ENCODE measurements at regions of chr22 and their contacts with region 1.

Region 1: DNA sequence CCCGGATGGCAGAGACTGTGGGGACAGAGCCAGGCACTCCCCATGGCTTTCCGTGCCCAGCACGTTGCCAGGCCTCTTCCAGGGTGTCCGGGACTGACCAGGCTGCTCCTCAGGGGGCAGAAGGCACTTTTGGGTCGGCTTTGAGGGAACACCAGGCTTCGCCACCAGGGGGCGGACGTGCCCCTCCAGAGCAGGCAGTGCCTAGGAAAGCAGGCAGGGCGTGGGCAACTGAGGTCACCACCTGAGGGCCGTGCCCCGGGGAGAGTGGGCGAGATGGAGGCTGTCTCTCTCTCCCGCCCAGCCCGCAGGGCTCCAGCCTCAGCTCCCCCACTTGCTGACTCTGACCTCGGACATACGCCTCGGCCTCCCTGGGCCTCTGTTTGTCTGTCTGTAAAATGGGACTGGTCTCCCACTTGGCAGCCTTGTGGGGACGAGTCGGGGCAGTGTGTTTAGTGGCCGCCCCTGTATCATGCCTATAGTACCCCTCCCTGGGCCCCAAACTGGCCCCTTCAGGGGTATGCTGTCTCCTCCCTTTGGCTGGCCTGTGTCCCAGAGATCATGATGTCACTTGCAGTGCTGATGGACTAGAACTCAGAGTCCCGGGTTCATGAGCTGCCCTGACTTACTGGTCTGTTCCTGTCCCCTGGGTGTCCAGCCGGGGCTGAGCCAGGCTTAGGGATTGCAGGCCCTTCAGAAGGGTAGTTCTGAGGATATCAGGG is 4.4 kb upstream of the PRR5 start:
- DNase-seq: peak; percentile 81
- H3K4me3 ChIP-seq: no peak overlapping the region
- H3K27ac ChIP-seq: no peak overlapping the region
- H3K4me1 ChIP-seq: peaks cover 6% of the 10 kb centered on the region
- H3K27me3 ChIP-seq: no peaks in the 10 kb centered on the region
- CTCF ChIP-seq: peak; percentile 85 to 92 (median 92)
- POLR2A ChIP-seq: no peak

Region 2: DNA sequence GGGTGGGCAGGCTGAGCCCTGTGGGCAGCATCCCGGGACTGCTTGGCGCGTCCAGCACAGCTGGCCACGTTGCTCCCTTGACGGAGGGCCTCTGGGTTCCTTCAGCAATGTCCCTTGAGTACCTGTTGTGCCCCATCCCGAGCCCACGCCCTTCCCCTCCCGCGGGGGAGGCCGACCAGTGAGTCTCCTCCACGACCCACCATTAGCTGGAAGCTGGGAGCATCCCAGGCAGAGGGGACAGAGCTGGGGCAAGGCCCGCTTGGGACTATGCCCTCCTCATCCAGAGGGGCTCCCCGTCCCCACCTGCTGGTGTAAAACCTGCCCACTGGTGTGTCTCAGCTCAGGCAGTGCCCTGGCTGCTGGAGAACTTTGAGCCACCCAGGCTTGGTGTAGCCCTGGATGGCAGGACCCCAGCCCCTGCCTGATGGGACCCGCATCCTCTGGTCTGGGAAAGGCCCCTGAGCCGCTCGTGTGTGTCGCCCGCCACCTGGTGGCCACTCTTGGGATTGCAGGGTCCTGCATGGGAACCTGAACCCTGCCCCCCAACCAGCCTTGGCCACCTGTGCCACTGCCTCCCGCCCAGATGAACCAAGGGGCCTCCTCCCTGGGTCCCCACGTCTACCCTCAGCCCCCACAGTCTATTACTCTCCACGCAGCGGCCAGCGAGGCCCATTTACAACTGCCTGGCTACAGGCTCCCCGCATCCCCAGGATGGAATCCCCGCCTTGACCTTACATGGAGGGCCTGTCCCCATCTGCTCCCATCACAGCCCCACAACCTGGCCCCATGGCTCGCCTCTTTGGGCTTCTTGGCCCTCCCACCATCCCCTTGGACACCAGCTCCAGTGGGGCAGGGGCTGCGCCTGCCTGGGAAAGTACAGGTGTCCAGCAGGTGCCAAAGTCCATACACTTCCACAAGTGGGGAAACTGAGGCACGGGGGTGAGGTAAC is 38.2 kb after region 1 on chr22:
- intact Hi-C with region 1: loop called (anchors 5 kb)
- DNase-seq: peak; percentile 86
- H3K4me3 ChIP-seq: no peak overlapping the region
- H3K27ac ChIP-seq: no peak overlapping the region
- H3K4me1 ChIP-seq: no peaks in the 10 kb centered on the region
- H3K27me3 ChIP-seq: no peaks in the 10 kb centered on the region
- CTCF ChIP-seq: peak; percentile 97 to 100 (median 97)
- POLR2A ChIP-seq: no peak